PC-9 (cell line): ENCODE measurements at regions of chr10 and their contacts with region 1.

Region 1: GRCh38 chr10:114110174-114110972 is 63.6 kb downstream of the CCDC186 start:
- DNase-seq: peak in 1 of 2 experiments; percentile 12
- H3K4me3 ChIP-seq: no peak overlapping the region
- H3K27ac ChIP-seq: no peak overlapping the region
- H3K4me1 ChIP-seq: no peaks in the 10 kb centered on the region
- H3K27me3 ChIP-seq: no peaks in the 10 kb centered on the region
- CTCF ChIP-seq: peak; percentile 64

Region 2: GRCh38 chr10:114143160-114143559 is 32.8 kb after region 1 on chr10:
- CTCF ChIA-PET with region 1: no interaction called
- POLR2A ChIA-PET with region 1: no interaction called
- intact Hi-C with region 1: no loop called
- DNase-seq: no peak
- H3K4me3 ChIP-seq: no peak overlapping the region
- H3K27ac ChIP-seq: no peak overlapping the region
- H3K4me1 ChIP-seq: no peaks in the 10 kb centered on the region
- H3K27me3 ChIP-seq: no peaks in the 10 kb centered on the region
- CTCF ChIP-seq: no peak

Region 3: GRCh38 chr10:114967071-114967470 is 856.7 kb after region 1 on chr10:
- CTCF ChIA-PET with region 1: no interaction called
- POLR2A ChIA-PET with region 1: interaction called, 16 read pairs
- intact Hi-C with region 1: no loop called
- DNase-seq: no peak
- H3K4me3 ChIP-seq: no peak overlapping the region
- H3K27ac ChIP-seq: no peak overlapping the region
- H3K4me1 ChIP-seq: no peaks in the 10 kb centered on the region
- H3K27me3 ChIP-seq: no peaks in the 10 kb centered on the region
- CTCF ChIP-seq: no peak